Activated CD4-positive, alpha-beta T cell treated with anti-CD3 and anti-CD28 coated beads, Interleukin-2, amount 10 ng/mL, durations not matched to agents 24 days and 14 days (primary cell): ENCODE measurements at regions of chr7 and their contacts with region 1.

Region 1: GRCh38 chr7:106793015-106793975 is 71.8 kb upstream of the PIK3CG start:
- DNase-seq: peak; percentile 77
- H3K4me3 Mint-ChIP-seq: no peak overlapping the region
- H3K27ac Mint-ChIP-seq: no peak overlapping the region
- H3K4me1 Mint-ChIP-seq: peaks cover 3% of the 10 kb centered on the region
- H3K27me3 Mint-ChIP-seq: peaks cover 10% of the 10 kb centered on the region

Region 2: GRCh38 chr7:105816266-105816828 is 976.9 kb before region 1 on chr7:
- intact Hi-C with region 1: no loop called
- DNase-seq: no peak
- H3K4me3 Mint-ChIP-seq: no peak overlapping the region
- H3K27ac Mint-ChIP-seq: no peak overlapping the region
- H3K4me1 Mint-ChIP-seq: peaks cover 15% of the 10 kb centered on the region
- H3K27me3 Mint-ChIP-seq: peaks cover 15% of the 10 kb centered on the region

Region 3: GRCh38 chr7:106588422-106589198 is 204.7 kb before region 1 on chr7:
- intact Hi-C with region 1: no loop called
- DNase-seq: no peak
- H3K4me3 Mint-ChIP-seq: no peak overlapping the region
- H3K27ac Mint-ChIP-seq: no peak overlapping the region
- H3K4me1 Mint-ChIP-seq: no peaks in the 10 kb centered on the region
- H3K27me3 Mint-ChIP-seq: peaks cover 6% of the 10 kb centered on the region

Region 4: GRCh38 chr7:106747804-106748203 is 45.5 kb before region 1 on chr7:
- intact Hi-C with region 1: no loop called
- DNase-seq: no peak
- H3K4me3 Mint-ChIP-seq: no peak overlapping the region
- H3K27ac Mint-ChIP-seq: no peak overlapping the region
- H3K4me1 Mint-ChIP-seq: peaks cover 6% of the 10 kb centered on the region
- H3K27me3 Mint-ChIP-seq: peaks cover 6% of the 10 kb centered on the region

Region 5: DNA sequence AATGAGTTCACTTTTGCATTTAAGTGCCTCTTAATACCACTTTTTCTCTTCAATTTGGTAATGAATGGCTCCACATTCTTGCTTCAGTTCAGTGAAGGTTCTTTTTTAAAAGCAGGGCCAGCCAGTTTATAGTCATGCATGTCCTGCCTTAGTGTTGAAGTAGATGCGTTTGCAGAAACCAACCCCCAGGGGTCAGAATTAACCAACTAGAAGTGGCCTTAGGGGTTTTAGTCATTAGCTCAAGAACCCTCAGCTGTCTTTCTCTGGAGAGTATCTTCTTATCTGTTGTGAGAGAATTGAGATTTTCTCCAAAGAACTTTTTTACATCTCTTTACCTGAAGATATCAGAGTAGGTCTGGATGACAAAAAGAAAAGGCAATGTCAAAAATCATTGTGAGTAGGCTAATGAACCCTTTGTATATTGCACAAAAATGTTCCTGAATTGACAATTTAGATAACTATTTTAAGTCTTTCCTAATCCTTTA is 154.0 kb after region 1 on chr7:
- intact Hi-C with region 1: loop called (anchors 10 kb)
- DNase-seq: peak; percentile 70
- H3K4me3 Mint-ChIP-seq: no peak overlapping the region
- H3K27ac Mint-ChIP-seq: no peak overlapping the region
- H3K4me1 Mint-ChIP-seq: no peaks in the 10 kb centered on the region
- H3K27me3 Mint-ChIP-seq: peaks cover 15% of the 10 kb centered on the region

Region 6: GRCh38 chr7:107150375-107151073 is 357.2 kb after region 1 on chr7:
- intact Hi-C with region 1: loop called (anchors 1 kb)
- DNase-seq: peak; percentile 91
- H3K4me3 Mint-ChIP-seq: no peak overlapping the region
- H3K27ac Mint-ChIP-seq: no peak overlapping the region
- H3K4me1 Mint-ChIP-seq: peaks cover 5% of the 10 kb centered on the region
- H3K27me3 Mint-ChIP-seq: peaks cover 7% of the 10 kb centered on the region